PC-9 (cell line): ENCODE measurements at regions of chr16 and their contacts with region 1.

Region 1: DNA sequence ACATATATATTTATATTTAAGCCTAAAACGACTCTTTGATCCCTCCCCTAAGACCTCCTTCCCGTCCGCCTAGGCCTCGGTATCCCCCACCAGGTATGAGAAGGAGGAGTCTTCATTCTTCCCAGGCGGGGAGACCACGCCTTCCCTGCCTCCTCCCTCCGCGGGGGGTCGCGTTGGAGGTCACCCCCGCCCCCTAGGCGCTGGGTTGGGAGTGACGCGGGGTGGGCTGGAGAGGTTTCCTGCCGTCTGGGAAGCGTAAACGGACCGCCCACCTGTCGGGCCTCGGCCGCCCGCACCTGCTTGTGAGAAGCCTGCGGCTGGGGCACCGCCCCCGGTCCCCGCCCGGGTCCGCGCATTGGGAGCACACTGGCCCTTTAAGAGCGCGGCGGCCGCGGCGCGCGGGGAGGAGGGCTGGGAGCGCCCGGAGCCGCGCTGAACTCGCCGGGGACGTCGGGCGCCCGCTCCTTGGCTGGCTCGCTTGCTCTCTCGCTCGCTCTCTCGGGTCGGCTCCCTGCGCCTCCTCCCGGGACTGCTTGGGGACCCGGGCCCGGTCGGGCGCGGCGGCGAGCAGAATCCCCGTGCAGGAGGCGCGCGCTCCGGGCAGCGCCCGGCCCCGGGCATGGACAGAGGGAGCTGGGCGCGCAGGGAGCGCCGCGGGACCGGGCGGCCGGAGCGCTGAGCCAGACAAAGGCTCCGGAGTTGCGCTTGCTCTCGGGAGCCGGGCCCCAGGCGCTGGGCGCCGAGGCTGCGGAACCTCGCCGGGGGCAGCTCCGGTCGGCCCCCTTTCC is at the start of gene MMP15:
- DNase-seq: peak; percentile 89 to 94
- H3K4me3 ChIP-seq: peak within 1 kb of the TSS; percentile 94
- H3K27ac ChIP-seq: peak within 1 kb of the TSS; percentile 91
- H3K4me1 ChIP-seq: peaks cover 40% of the 10 kb centered on the region
- H3K27me3 ChIP-seq: no peaks in the 10 kb centered on the region
- CTCF ChIP-seq: no peak
- total RNA-seq, gene MMP15: 20.1 and 23.9 TPM in 2 replicates

Region 2: GRCh38 chr16:57734925-57735754 is 290.4 kb before region 1 on chr16:
- CTCF ChIA-PET with region 1: no interaction called
- POLR2A ChIA-PET with region 1: interaction called, 21 read pairs
- intact Hi-C with region 1: no loop called
- DNase-seq: peak; percentile 96 to 100
- H3K4me3 ChIP-seq: peak overlapping the region; percentile 90
- H3K27ac ChIP-seq: peak overlapping the region; percentile 64
- H3K4me1 ChIP-seq: peaks cover 18% of the 10 kb centered on the region
- H3K27me3 ChIP-seq: no peaks in the 10 kb centered on the region
- CTCF ChIP-seq: no peak

Region 3: GRCh38 chr16:57976331-57976796 is 49.2 kb before region 1 on chr16:
- CTCF ChIA-PET with region 1: no interaction called
- POLR2A ChIA-PET with region 1: no interaction called
- intact Hi-C with region 1: no loop called
- DNase-seq: peak; percentile 45 to 62
- H3K4me3 ChIP-seq: no peak overlapping the region
- H3K27ac ChIP-seq: peak overlapping the region; percentile 37
- H3K4me1 ChIP-seq: peaks cover 15% of the 10 kb centered on the region
- H3K27me3 ChIP-seq: no peaks in the 10 kb centered on the region
- CTCF ChIP-seq: no peak

Region 4: GRCh38 chr16:58129097-58129936 is 103.8 kb after region 1 on chr16 and contains the start of gene CFAP20:
- CTCF ChIA-PET with region 1: interaction called, 9 read pairs
- POLR2A ChIA-PET with region 1: interaction called, 6 read pairs
- intact Hi-C with region 1: loop called (anchors 1 kb)
- DNase-seq: peak; percentile 98 to 99
- H3K4me3 ChIP-seq: peak within 1 kb of the TSS; percentile 88
- H3K27ac ChIP-seq: peak within 1 kb of the TSS; percentile 57
- H3K4me1 ChIP-seq: peaks cover 34% of the 10 kb centered on the region
- H3K27me3 ChIP-seq: no peaks in the 10 kb centered on the region
- CTCF ChIP-seq: no peak
- total RNA-seq, gene CFAP20: 35.9 and 49.6 TPM in 2 replicates

Region 5: GRCh38 chr16:58306327-58306726 is 280.8 kb after region 1 on chr16:
- CTCF ChIA-PET with region 1: no interaction called
- POLR2A ChIA-PET with region 1: no interaction called
- intact Hi-C with region 1: loop called (anchors 2 kb)
- DNase-seq: peak in 1 of 2 experiments; percentile 28
- H3K4me3 ChIP-seq: no peak overlapping the region
- H3K27ac ChIP-seq: no peak overlapping the region
- H3K4me1 ChIP-seq: no peaks in the 10 kb centered on the region
- H3K27me3 ChIP-seq: no peaks in the 10 kb centered on the region
- CTCF ChIP-seq: peak; percentile 62

Region 6: DNA sequence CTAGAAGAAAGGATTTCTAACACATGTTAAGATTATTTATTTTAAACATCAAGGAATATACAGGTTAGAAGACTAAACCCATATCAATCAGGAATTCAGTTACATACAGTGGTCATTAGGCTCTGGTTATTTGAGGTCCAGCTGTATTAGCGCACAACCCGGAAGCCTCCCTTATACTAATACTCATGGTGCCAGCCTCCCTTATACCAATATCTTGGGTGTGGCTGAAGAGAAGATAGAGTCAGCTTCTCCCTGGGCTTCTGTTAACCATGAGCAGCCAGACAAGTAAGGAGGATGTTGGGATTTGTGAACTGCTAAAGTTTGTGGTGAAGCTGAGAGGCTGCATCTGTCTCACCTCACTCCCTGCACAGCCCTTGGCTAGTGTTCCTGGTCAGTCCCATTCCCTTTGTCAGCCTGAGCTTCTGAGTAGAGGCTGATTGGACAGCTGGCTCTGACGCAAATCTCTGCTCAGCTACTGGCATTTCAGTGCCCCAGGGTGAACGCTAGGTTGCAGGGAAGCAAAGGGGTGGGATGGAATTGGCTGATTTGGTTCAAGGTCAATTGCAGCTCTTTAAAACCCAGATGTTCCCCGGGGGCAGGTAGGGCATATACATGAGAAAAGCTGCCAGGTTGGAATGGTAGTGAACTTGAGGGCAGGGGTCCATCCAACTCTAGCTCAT is 627.1 kb after region 1 on chr16:
- CTCF ChIA-PET with region 1: no interaction called
- POLR2A ChIA-PET with region 1: no interaction called
- intact Hi-C with region 1: loop called (anchors 10 kb)
- DNase-seq: no peak
- H3K4me3 ChIP-seq: no peak overlapping the region
- H3K27ac ChIP-seq: no peak overlapping the region
- H3K4me1 ChIP-seq: peaks cover 7% of the 10 kb centered on the region
- H3K27me3 ChIP-seq: no peaks in the 10 kb centered on the region
- CTCF ChIP-seq: no peak